Cardiac septum (tissue), 1 donor: ENCODE measurements at regions of chr3 and their contacts with region 1.

Region 1: DNA sequence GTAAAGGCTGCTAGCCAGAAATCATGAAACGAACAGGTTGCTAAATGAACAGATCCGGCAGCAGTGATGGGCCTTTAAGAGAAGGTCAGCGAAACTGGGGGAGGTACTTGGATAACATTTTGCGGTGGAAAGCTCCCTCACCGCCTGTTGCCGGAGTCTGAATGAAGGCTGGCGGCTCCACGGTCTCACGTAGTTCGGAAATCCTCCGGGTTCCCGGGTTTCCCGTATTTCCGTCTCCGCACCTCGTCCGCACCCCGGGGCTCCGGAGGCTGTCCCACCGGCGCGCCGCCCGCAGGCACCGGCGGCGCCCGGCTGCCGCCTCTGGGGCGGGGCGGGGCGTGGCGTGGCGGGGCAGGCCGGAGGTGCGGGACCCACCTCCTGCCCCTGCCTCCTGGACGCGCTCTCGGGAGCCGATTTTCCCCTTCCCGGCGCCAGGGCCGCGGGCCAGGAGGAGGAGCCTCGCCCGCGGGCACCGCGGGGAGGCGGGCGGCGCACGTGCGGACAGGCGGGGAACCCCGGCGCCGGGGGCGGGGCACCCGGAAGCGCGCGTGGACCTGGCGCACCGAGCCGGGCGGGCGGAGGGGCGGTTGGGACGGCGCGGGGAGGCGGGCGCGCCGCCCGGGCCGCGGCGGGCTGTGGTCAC is at the start of gene ZDHHC23:
- DNase-seq: peak; percentile 85
- total RNA-seq, gene ZDHHC23: 2.9 TPM

Region 2: GRCh38 chr3:113514265-113514769 is 433.2 kb before region 1 on chr3:
- intact Hi-C with region 1: loop called (anchors 5 kb)
- DNase-seq: no peak